IMR-90 (cell line): ENCODE measurements at regions of chr11 and their contacts with region 1.

Region 1: GRCh38 chr11:105034813-105035620 is at the start of gene CASP1:
- DNase-seq: peak; percentile 89
- ATAC-seq: peak; percentile 95
- H3K4me3 ChIP-seq: peak within 1 kb of the TSS; percentile 56
- H3K27ac ChIP-seq: peak within 1 kb of the TSS; percentile 65
- H3K4me1 ChIP-seq: peaks cover 4% of the 10 kb centered on the region
- H3K27me3 ChIP-seq: no peaks in the 10 kb centered on the region
- CTCF ChIP-seq: no peak
- POLR2A ChIP-seq: no peak
- RAD21 ChIP-seq: no peak
- total RNA-seq, gene CASP1: 24.7 and 31.2 TPM in 2 replicates

Region 2: GRCh38 chr11:104653406-104653805 is 381.6 kb before region 1 on chr11:
- CTCF ChIA-PET with region 1: no interaction called
- POLR2A ChIA-PET with region 1: no interaction called
- dilution Hi-C with region 1: no loop called
- in situ Hi-C with region 1: no loop called
- intact Hi-C with region 1: no loop called
- DNase-seq: no peak
- ATAC-seq: no peak
- H3K4me3 ChIP-seq: no peak overlapping the region
- H3K27ac ChIP-seq: no peak overlapping the region
- H3K4me1 ChIP-seq: no peaks in the 10 kb centered on the region
- H3K27me3 ChIP-seq: no peaks in the 10 kb centered on the region
- CTCF ChIP-seq: no peak
- POLR2A ChIP-seq: no peak
- RAD21 ChIP-seq: no peak

Region 3: GRCh38 chr11:104823638-104824037 is 211.4 kb before region 1 on chr11:
- CTCF ChIA-PET with region 1: no interaction called
- POLR2A ChIA-PET with region 1: no interaction called
- dilution Hi-C with region 1: no loop called
- in situ Hi-C with region 1: no loop called
- intact Hi-C with region 1: no loop called
- DNase-seq: no peak
- ATAC-seq: no peak
- H3K4me3 ChIP-seq: no peak overlapping the region
- H3K27ac ChIP-seq: no peak overlapping the region
- H3K4me1 ChIP-seq: 0 out of 2 replicates have a peak, but pooled peaks cover 2% of the 10 kb centered on the region
- H3K27me3 ChIP-seq: no peaks in the 10 kb centered on the region
- CTCF ChIP-seq: no peak
- POLR2A ChIP-seq: no peak
- RAD21 ChIP-seq: no peak

Region 4: DNA sequence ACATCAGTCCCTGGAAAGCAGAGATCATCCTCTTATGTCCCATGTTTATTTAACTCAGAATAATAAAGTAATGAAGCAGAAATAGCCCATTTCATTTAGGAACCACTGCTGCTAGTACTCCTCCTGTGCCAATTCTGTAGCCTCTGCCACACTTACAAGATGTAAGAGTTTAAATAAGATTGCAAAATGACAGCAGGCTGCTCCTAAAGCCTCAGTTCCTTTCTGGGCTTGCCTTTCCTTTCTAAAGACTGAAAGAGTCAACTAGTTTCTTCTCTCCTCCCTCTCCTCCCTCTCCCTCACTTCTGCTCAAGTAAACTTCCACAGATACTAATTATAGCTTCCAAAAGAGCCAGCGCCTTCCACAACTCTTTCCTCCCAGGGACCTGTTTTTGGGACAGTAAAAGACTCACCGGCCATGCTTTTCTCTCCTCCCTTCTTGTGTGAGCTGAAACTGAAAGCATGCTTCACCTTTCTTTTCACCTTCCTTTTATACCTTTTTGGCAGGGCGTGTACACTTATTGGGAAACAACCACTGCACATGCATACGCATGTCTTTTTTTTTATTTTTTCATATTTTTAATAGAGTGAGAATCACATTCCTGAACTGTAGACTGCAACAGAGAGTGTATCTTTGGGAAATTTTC is 36.2 kb after region 1 on chr11:
- CTCF ChIA-PET with region 1: no interaction called
- POLR2A ChIA-PET with region 1: no interaction called
- dilution Hi-C with region 1: no loop called
- in situ Hi-C with region 1: no loop called
- intact Hi-C with region 1: no loop called
- DNase-seq: no peak
- ATAC-seq: no peak
- H3K4me3 ChIP-seq: no peak overlapping the region
- H3K27ac ChIP-seq: no peak overlapping the region
- H3K4me1 ChIP-seq: no peaks in the 10 kb centered on the region; the same call in 1 of the 2 replicates
- H3K27me3 ChIP-seq: no peaks in the 10 kb centered on the region
- CTCF ChIP-seq: no peak
- POLR2A ChIP-seq: no peak
- RAD21 ChIP-seq: no peak

Region 5: GRCh38 chr11:105609832-105610781 is 575.1 kb after region 1 on chr11 and contains the start of gene GRIA4:
- CTCF ChIA-PET with region 1: no interaction called
- POLR2A ChIA-PET with region 1: no interaction called
- dilution Hi-C with region 1: no loop called
- in situ Hi-C with region 1: no loop called
- intact Hi-C with region 1: loop called (anchors 5 kb)
- DNase-seq: peak; percentile 74
- ATAC-seq: peak; percentile 89
- H3K4me3 ChIP-seq: peak within 1 kb of the TSS; percentile 53
- H3K27ac ChIP-seq: peak within 1 kb of the TSS; percentile 10; the same call in 1 of the 2 replicates
- H3K4me1 ChIP-seq: no peaks in the 10 kb centered on the region
- H3K27me3 ChIP-seq: no peaks in the 10 kb centered on the region
- CTCF ChIP-seq: no peak
- POLR2A ChIP-seq: no peak
- RAD21 ChIP-seq: 0 out of 2 replicates have a peak, but pooled peaks have one; percentile 7
- total RNA-seq, gene GRIA4: 0.36 and 0.56 TPM in 2 replicates